BJ (cell line): ENCODE measurements at regions of chr7 and their contacts with region 1.

Region 1: GRCh38 chr7:101410743-101411507 is 48.2 kb downstream of the COL26A1 start:
- DNase-seq: no peak
- H3K4me3 ChIP-seq: no peak overlapping the region
- H3K27me3 ChIP-seq: peaks cover 11% of the 10 kb centered on the region
- CTCF ChIP-seq: peak; percentile 94

Region 2: DNA sequence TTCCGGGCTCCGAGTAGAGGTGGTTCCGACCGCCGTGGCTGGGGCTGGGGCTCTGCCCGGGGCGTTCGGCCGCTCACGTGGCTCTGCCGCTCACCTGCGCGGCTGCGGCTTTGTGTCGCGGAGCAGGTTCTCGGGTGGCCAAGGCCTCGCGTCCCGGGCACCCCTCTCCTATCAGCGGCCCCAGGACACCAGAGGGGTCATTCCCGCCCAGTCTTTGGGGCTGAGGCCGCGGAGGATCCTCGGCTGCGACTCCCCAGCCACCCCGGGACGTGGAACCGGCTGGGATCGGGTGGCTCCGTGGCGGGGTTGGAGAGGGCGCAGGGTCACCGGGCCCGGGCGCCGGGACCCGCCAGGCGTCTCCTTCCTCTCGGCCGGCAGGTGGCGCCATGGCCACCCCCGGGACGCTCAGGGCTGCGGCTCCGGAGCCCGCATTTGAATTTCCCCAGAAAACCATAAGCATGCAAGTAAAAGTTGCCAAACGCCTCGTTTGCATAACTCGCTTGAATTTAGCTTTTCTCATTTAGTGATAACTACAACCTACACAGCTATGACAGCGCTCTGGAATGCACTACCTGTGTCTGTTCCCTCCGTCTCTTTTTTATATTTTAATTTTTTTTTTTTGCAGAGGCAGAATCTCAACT is 47.1 kb before region 1 on chr7:
- CTCF ChIA-PET with region 1: interaction called, 88 read pairs
- POLR2A ChIA-PET with region 1: no interaction called
- DNase-seq: no peak
- H3K4me3 ChIP-seq: peak overlapping the region; percentile 38
- H3K27me3 ChIP-seq: peaks cover 10% of the 10 kb centered on the region
- CTCF ChIP-seq: peak; percentile 74

Region 3: GRCh38 chr7:101373812-101374614 is 36.9 kb before region 1 on chr7:
- CTCF ChIA-PET with region 1: interaction called, 38 read pairs
- POLR2A ChIA-PET with region 1: no interaction called
- DNase-seq: peak; percentile 38
- H3K4me3 ChIP-seq: no peak overlapping the region
- H3K27me3 ChIP-seq: peaks cover 14% of the 10 kb centered on the region
- CTCF ChIP-seq: no peak

Region 4: DNA sequence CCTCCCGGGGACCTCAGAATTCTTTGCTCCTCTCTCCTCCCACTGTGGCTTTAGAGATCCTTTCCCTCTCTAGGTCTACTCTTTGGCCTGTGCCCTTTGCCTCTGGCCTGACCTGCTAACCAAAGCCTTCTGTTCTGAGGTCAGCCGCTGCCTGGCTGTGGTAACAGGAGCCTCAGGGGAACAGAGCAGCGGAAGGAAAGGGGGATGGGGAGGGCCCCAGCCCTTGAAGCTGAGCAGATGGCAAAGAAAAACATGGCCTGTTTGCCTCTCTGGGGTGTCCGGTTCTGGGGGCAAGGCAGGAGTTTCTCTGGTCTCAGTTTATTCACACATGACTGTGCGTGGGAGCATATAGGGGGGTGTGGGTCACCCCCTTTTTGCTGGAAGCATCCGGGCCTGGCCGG is 20.0 kb before region 1 on chr7:
- CTCF ChIA-PET with region 1: interaction called, 28 read pairs
- POLR2A ChIA-PET with region 1: no interaction called
- DNase-seq: no peak
- H3K4me3 ChIP-seq: no peak overlapping the region
- H3K27me3 ChIP-seq: peaks cover 7% of the 10 kb centered on the region
- CTCF ChIP-seq: no peak

Region 5: DNA sequence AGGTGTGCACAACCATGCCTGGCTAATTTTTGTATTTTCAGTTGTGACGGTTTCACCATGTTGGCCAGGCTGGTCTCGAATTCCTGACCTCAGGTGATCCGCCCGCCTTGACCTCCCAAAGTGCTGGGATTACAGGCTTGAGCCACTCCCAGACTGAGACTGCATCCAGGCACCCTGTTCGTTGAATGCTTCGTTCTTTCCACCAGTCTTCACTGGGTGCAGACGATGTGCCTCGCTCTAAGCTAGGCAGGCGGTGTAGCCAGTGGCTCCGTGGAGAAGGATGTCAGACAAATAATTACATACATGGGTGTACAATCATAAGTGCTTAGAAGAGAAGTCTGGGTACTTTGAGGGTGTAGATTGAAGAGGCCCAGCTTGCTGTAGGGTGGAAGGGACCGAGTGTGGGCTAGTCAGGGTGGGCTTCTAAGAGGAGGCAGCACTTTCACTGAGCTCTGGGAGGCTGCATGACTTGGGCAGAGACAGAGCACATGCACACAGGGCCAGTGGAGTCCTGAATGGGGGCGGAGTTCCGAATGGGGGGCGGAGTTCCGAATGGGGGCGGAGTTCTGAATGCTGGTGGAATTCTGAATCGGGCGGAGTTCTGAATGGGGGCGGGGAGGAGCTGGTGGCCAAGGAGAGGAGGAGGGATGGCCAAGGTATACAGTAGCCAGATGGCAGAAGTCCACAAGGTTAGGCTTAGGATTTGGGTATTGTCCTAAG is 26.1 kb after region 1 on chr7:
- CTCF ChIA-PET with region 1: interaction called, 12 read pairs
- POLR2A ChIA-PET with region 1: no interaction called
- DNase-seq: no peak
- H3K4me3 ChIP-seq: no peak overlapping the region
- H3K27me3 ChIP-seq: peaks cover 27% of the 10 kb centered on the region
- CTCF ChIP-seq: no peak

Region 6: DNA sequence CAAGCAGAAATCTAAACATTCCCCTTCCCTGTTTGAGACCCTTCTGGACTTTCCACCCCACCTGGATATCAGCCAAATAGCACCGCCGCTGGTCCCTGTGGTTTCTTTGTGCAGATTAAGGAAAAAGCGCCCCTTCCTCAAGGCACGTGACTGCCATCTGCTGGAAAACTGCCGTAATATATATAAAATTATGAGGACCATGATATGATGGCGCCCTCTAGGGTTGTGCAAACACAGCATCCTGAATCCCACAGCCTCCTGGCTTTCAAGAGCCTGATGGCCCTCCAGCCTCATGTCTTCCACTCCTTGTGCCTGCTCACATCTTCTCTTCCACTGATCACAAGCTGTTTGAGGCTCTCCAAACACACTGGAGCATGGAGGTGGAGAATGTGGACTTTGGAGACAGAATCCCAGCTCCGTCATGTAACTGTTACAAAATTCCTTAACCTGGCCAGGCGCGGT is 96.9 kb after region 1 on chr7:
- CTCF ChIA-PET with region 1: interaction called, 15 read pairs
- POLR2A ChIA-PET with region 1: no interaction called
- DNase-seq: no peak
- H3K4me3 ChIP-seq: no peak overlapping the region
- H3K27me3 ChIP-seq: peaks cover 9% of the 10 kb centered on the region
- CTCF ChIP-seq: peak; percentile 83